Caco-2 (cell line): ENCODE measurements at regions of chr1 and their contacts with region 1.

Region 1: DNA sequence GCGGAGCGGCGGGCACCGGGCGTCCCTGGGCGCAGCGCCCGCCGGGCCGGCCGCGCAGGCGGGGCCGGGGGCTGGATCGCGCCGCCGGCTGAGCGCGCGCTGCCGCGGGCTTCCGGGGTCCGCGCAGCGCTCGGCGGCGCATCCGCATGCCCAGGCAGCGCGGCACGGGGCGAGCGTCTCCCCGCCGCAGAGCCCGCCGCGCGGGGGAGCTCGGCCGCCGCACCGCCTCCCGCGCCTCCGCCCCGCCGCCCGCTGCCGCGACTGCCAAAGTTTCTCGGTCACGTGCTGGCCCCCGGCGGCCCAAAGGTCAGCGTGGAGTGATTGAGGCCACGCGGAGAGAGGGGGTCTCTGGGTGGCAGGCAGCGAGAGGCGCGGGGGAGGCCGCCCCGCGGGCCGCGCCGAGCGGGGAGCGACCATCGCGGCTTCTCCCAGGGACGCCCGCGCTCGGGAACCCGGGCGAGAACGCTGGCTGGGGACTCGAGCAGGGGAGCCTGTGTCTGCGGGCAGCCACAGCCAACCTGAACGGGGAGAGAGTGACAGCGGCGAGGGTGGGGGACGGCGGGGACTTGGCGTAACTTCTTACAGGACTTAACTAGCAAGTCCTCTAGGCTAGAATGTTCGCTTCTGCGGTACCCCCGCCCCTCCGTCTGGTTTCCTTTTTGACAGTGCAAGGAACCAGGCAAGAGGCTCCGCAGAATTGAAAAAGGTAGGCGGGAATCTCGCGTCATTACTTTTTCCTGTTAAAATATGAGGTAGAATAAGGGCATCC is at the start of gene ILDR2:
- DNase-seq: peak; percentile 55 to 57
- H3K4me3 ChIP-seq: peak within 1 kb of the TSS; percentile 70
- H3K4me3 Mint-ChIP-seq: peak within 1 kb of the TSS; percentile 57
- H3K27ac Mint-ChIP-seq: no peak within 1 kb of the TSS
- H3K4me1 ChIP-seq: peaks cover 6% of the 10 kb centered on the region; the same call in 1 of the 2 replicates
- H3K4me1 Mint-ChIP-seq: peaks cover 7% of the 10 kb centered on the region
- H3K27me3 ChIP-seq: peaks cover 3% of the 10 kb centered on the region
- H3K27me3 Mint-ChIP-seq: peaks cover 38% of the 10 kb centered on the region
- CTCF ChIP-seq: no peak
- total RNA-seq, gene ILDR2: 0.98 and 1.2 TPM in 2 replicates

Region 2: DNA sequence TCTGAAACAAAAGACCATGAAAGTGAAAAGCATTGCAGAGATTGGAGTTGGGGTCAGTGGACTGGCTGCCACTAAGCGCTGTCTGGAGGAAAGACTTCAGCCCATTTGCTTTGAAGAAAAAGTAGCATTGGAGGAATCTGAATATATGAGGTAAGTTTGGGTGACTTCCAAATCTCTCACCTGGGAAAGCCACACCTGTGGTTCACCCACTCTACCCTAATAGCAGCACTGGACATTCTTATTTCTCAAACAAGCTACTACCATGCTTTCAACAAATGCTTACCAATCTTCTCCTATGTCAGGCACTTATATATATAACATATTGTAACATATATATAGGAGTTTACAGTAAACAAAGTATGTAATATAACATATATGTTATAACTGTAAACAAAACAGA is 212.2 kb before region 1 on chr1:
- CTCF ChIA-PET with region 1: no interaction called
- POLR2A ChIA-PET with region 1: no interaction called
- intact Hi-C with region 1: no loop called
- DNase-seq: no peak
- H3K4me3 ChIP-seq: no peak overlapping the region
- H3K4me3 Mint-ChIP-seq: no peak overlapping the region
- H3K27ac Mint-ChIP-seq: no peak overlapping the region
- H3K4me1 ChIP-seq: no peaks in the 10 kb centered on the region
- H3K4me1 Mint-ChIP-seq: no peaks in the 10 kb centered on the region
- H3K27me3 ChIP-seq: no peaks in the 10 kb centered on the region
- H3K27me3 Mint-ChIP-seq: no peaks in the 10 kb centered on the region
- CTCF ChIP-seq: no peak

Region 3: GRCh38 chr1:167059045-167059808 is 83.7 kb after region 1 on chr1:
- CTCF ChIA-PET with region 1: interaction called, 13 read pairs
- POLR2A ChIA-PET with region 1: no interaction called
- intact Hi-C with region 1: loop called (anchors 1 kb)
- DNase-seq: peak; percentile 72 to 81
- H3K4me3 ChIP-seq: no peak overlapping the region
- H3K4me3 Mint-ChIP-seq: peak overlapping the region; percentile 44
- H3K27ac Mint-ChIP-seq: no peak overlapping the region
- H3K4me1 ChIP-seq: no peaks in the 10 kb centered on the region; the same call in 1 of the 2 replicates
- H3K4me1 Mint-ChIP-seq: no peaks in the 10 kb centered on the region
- H3K27me3 ChIP-seq: no peaks in the 10 kb centered on the region
- H3K27me3 Mint-ChIP-seq: no peaks in the 10 kb centered on the region
- CTCF ChIP-seq: peak; percentile 90 to 95

Region 4: DNA sequence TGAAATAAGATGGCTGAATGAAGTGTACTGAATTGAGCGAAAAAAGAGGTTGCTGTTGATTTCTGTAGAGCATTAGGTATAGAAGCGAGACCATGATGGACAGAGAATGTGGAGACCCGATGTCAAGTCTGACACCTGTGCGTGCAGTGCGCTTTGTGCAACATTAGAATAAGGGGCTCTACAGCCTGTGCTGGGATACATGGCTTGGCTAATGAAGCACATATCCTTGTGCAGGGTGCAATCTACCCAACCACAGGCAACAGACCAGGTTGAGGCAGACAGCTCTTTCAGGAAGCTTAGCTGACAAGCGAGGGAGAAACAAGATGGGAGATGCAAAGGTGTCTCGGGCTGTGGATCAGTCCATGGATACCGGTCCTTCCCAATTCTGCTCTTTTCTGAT is 95.7 kb after region 1 on chr1:
- CTCF ChIA-PET with region 1: no interaction called
- POLR2A ChIA-PET with region 1: no interaction called
- intact Hi-C with region 1: no loop called
- DNase-seq: no peak
- H3K4me3 ChIP-seq: no peak overlapping the region
- H3K4me3 Mint-ChIP-seq: no peak overlapping the region
- H3K27ac Mint-ChIP-seq: no peak overlapping the region
- H3K4me1 ChIP-seq: no peaks in the 10 kb centered on the region
- H3K4me1 Mint-ChIP-seq: no peaks in the 10 kb centered on the region
- H3K27me3 ChIP-seq: no peaks in the 10 kb centered on the region
- H3K27me3 Mint-ChIP-seq: no peaks in the 10 kb centered on the region
- CTCF ChIP-seq: no peak

Region 5: GRCh38 chr1:167599957-167600581 is 624.5 kb after region 1 on chr1:
- CTCF ChIA-PET with region 1: no interaction called
- POLR2A ChIA-PET with region 1: no interaction called
- intact Hi-C with region 1: no loop called
- DNase-seq: peak in 1 of 2 experiments; percentile 8
- H3K4me3 ChIP-seq: no peak overlapping the region
- H3K4me3 Mint-ChIP-seq: no peak overlapping the region
- H3K27ac Mint-ChIP-seq: no peak overlapping the region
- H3K4me1 ChIP-seq: no peaks in the 10 kb centered on the region
- H3K4me1 Mint-ChIP-seq: peaks cover 14% of the 10 kb centered on the region
- H3K27me3 ChIP-seq: no peaks in the 10 kb centered on the region
- H3K27me3 Mint-ChIP-seq: peaks cover 6% of the 10 kb centered on the region
- CTCF ChIP-seq: peak; percentile 42 to 44